ENCODE measurements at regions of chr17 and their contacts with region 1.

Region 1: DNA sequence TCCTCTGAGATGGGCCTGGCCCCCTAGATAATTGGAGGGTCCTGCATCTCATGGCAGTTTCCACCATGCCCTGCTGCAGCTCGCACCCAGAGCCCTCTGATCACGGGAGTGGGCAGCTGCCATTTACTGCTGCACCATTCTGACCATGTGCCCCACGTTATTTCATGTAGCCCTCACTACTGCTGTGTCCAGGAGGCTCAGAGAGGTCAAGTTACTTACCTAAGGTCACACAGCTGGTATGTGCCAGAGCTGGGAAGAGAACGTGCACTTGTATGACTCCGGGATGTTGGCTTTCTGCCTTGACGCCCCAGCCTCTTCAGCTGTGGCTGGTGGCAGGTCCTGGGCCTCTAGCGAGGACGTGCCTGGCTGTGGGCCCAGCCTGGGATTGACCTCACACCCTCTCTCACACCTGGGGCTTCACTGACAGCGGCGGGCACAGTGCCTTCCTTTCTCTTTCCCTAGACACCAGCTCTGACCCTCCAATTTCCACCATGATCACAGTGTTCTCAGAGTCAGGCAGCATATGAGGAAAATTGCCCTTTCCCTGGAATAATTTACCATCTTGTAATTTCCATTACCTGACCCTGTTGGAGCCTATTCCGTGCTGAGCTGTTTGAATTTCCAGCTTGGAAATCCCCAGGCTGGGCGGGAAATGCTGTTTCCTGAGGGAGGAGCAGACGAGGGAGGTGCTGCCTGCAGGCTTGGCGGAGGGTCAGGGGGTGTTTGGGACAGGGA is 18.5 kb upstream of the DOC2B start:
- DNase-seq: peak; percentile 82

Region 2: GRCh38 chr17:178292-179065 is 21.5 kb before region 1 on chr17:
- intact Hi-C with region 1: loop called in 1 of 2 experiments (anchors 1 kb)
- DNase-seq: no peak

Region 3: GRCh38 chr17:233473-233941 is 33.5 kb after region 1 on chr17:
- intact Hi-C with region 1: no loop called
- DNase-seq: peak; percentile 84

Region 4: DNA sequence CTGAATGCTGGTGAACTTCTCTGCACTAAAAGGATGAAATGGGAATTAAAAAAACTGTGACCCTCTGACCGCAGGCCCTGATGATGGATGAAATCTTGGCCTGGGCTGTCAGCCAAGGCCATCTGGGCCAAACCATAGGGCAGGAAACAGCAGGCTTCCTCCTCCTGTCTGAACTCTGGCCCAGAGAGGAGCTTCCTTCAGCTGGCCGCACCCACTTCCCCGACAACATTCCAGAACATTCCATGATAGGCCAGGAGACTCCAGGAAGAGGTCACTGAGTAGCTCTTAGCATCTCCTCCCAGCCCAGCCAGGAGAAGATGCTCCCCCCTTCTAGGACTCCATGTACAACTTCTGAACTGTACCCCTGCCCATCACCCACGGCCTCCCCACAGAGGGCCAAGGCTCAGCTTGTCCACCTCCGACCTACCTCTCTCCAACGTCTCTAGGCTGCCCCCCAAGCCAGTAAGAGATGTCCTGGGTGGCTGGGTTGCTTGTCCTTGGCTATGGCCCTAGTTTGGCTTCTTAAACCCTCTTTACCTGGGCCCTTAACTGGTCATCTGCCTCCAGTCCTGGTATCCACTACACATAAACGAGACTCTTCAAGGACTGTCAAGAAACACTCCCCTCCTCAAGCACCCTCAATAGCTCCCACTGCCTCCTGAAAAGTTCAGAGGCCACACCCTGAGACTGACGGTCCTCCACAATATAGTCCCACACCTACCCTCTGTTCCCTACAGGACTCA is 150.9 kb after region 1 on chr17:
- intact Hi-C with region 1: loop called in 1 of 2 experiments (anchors 10 kb)
- DNase-seq: peak; percentile 94

Region 5: GRCh38 chr17:752002-752619 is 552.1 kb after region 1 on chr17 and contains the start of gene GEMIN4:
- intact Hi-C with region 1: no loop called
- DNase-seq: peak; percentile 98
- total RNA-seq, gene GEMIN4: 12.5 to 13.2 TPM

Measured in posterior vena cava (tissue), 2 donors.